ENCODE measurements at regions of chr1 and their contacts with region 1.

Region 1: DNA sequence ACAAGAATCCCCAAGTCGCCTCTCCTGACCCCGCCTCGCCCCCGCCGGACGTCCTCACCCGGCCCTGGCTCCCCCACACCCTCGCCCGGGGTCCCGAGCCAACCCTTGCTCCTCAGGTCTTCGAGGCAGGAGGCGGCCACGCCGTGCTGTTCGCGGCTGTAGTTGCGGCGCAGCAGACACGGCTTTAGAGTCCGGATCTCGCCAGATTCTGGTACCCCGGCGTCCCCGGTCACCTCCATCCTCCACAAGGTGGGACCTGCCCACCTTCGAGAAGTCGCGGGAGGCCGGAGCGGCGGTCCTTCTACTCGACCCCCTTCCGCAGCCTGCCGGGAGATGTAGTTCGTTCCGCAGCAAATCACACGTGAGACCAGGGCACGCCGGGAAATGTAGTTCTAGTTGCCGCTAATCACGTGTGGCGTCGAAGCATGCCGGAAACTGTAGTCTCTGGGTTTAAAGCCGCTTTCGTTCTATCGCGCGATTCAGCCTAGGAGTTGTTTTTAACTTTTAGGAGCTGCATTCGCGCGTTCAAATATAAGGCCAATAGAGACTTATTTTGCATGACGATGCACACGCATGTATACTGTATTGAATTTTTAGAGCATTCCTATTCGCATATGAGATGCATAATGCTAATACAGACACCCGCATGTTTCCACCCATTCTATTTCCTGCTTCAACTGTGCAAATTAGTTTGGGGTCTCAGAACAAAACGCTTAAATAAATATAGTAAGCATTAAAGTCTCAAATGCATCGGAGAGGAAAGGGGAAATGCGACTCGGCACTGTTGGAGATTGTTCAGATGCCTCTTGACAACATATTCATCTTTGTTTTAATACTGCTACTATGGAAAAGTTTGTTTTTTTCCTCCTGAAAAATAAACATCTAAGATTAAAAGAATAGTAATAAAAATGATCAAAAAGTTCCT is at the start of gene DFFA:
- DNase-seq: peak; percentile 68 to 95 (median 87)
- ATAC-seq: peak; percentile 90
- H3K4me3 ChIP-seq: peak within 1 kb of the TSS; percentile 69
- H3K4me3 Mint-ChIP-seq: peak within 1 kb of the TSS; percentile 87 to 96 (median 92)
- H3K27ac ChIP-seq: peak within 1 kb of the TSS; percentile 68
- H3K27ac Mint-ChIP-seq: peak within 1 kb of the TSS; percentile 78 to 93 (median 90)
- H3K4me1 ChIP-seq: peaks cover 21 to 37% of the 10 kb centered on the region in 2 donors
- H3K4me1 Mint-ChIP-seq: peaks cover 12 to 58% (median 49%) of the 10 kb centered on the region in 7 donors
- H3K27me3 ChIP-seq: no peaks in the 10 kb centered on the region
- H3K27me3 Mint-ChIP-seq: no peaks in the 10 kb centered on the region
- total RNA-seq, gene DFFA: 13.5 to 36.0 (median 23.4) TPM

Region 2: DNA sequence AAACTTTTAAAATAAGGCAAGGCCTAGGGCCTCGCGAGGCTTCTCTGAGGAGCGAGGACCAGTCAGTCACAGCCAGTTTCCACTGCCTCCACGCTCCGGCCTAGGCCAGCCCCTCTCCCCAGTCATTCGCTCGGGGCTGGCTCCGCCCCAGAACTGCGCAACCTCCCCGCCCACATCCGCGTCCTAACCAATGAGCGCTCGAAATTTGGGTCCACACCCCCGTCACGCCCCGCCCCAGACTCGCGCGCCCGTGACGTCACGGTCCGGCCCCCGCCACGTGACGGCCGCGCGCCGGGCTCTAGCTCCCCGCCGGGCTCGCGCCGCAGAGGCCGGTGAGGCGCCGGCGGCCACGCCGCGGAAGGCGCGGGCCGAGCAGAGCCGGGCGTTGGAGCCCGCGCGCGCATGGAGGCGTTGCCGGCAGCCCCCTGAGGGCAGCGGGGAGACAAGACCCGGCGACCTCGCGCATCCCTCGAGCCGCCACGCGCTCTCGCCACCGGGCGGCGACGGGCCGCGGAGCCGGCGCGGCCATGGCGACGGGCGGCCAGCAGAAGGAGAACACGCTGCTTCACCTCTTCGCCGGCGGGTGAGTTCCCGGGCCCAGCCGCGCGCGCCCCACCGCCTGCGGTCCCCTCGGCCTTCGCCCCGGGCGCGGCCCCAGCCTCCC is 933.2 kb before region 1 on chr1 and contains the start of gene SLC25A33:
- CTCF ChIA-PET with region 1: no interaction called
- POLR2A ChIA-PET with region 1: no interaction called
- intact Hi-C with region 1: loop called in 1 of 2 experiments (anchors 5 kb)
- DNase-seq: peak; percentile 92 to 99 (median 95)
- ATAC-seq: peak; percentile 99
- H3K4me3 ChIP-seq: peak within 1 kb of the TSS; percentile 58
- H3K4me3 Mint-ChIP-seq: peak within 1 kb of the TSS; percentile 86 to 93 (median 90)
- H3K27ac ChIP-seq: peak within 1 kb of the TSS; percentile 73
- H3K27ac Mint-ChIP-seq: peak within 1 kb of the TSS; percentile 85 to 97 (median 91)
- H3K4me1 ChIP-seq: peaks cover 5 to 8% of the 10 kb centered on the region in 2 donors
- H3K4me1 Mint-ChIP-seq: peaks cover 18 to 38% (median 31%) of the 10 kb centered on the region in 7 donors
- H3K27me3 ChIP-seq: no peaks in the 10 kb centered on the region
- H3K27me3 Mint-ChIP-seq: no peaks in the 10 kb centered on the region
- total RNA-seq, gene SLC25A33: 2.5 to 5.8 (median 3.9) TPM

Region 3: DNA sequence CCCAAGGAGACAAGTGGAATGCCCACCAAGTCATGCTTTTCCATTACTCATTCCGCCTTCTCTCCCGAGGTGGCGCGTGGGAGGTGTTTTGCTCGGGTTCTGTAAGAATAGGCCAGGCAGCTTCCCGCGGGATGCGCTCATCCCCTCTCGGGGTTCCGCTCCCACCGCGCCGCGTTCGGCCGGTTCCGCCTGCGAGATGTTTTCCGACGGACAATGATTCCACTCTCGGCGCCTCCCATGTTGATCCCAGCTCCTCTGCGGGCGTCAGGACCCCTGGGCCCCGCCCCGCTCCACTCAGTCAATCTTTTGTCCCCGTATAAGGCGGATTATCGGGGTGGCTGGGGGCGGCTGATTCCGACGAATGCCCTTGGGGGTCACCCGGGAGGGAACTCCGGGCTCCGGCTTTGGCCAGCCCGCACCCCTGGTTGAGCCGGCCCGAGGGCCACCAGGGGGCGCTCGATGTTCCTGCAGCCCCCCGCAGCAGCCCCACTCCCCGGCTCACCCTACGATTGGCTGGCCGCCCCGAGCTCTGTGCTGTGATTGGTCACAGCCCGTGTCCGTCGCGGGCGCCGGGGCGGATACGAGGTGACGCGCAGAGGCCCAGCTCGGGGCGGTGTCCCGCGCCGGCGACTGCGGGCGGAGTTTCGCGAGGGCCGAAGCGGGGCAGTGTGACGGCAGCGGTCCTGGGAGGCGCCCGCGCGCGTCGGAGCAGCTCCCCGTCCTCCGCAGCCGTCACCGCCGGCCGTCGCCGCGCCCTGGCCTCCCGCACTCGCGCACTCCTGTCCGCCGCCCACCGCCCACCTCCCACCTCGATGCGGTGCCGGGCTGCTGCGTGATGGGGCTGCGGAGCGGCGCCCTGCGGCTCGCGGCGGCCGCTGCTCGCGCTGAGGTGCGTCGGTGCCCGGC is 262.3 kb before region 1 on chr1 and contains the start of gene KIF1B:
- CTCF ChIA-PET with region 1: no interaction called
- POLR2A ChIA-PET with region 1: no interaction called
- intact Hi-C with region 1: loop called in 1 of 2 experiments (anchors 5 kb)
- DNase-seq: peak; percentile 93 to 98 (median 95)
- ATAC-seq: peak; percentile 99
- H3K4me3 ChIP-seq: peak within 1 kb of the TSS; percentile 94
- H3K4me3 Mint-ChIP-seq: peak within 1 kb of the TSS; percentile 83 to 93 (median 90)
- H3K27ac ChIP-seq: peak within 1 kb of the TSS; percentile 75
- H3K27ac Mint-ChIP-seq: peak within 1 kb of the TSS; percentile 51 to 82 (median 67)
- H3K4me1 ChIP-seq: peaks cover 5 to 15% of the 10 kb centered on the region in 2 donors
- H3K4me1 Mint-ChIP-seq: peaks cover 14 to 37% (median 21%) of the 10 kb centered on the region in 7 donors
- H3K27me3 ChIP-seq: peaks cover 0 to 4% of the 10 kb centered on the region in 2 donors
- H3K27me3 Mint-ChIP-seq: peaks cover 0 to 8% (median 0%) of the 10 kb centered on the region in 5 donors
- total RNA-seq, gene KIF1B: 10.4 to 21.6 (median 13.4) TPM

Region 4: GRCh38 chr1:10494754-10495474 is 22.4 kb after region 1 on chr1:
- CTCF ChIA-PET with region 1: interaction called, 9 read pairs
- POLR2A ChIA-PET with region 1: interaction called, 6 read pairs
- intact Hi-C with region 1: loop called (anchors 1 kb)
- DNase-seq: peak; percentile 66 to 83 (median 76)
- ATAC-seq: peak; percentile 88
- H3K4me3 ChIP-seq: peak overlapping the region; percentile 94
- H3K4me3 Mint-ChIP-seq: peak overlapping the region; percentile 82 to 93 (median 88)
- H3K27ac ChIP-seq: peak overlapping the region; percentile 79
- H3K27ac Mint-ChIP-seq: peak overlapping the region; percentile 91 to 97 (median 96)
- H3K4me1 ChIP-seq: peaks cover 17 to 19% of the 10 kb centered on the region in 2 donors
- H3K4me1 Mint-ChIP-seq: peaks cover 30 to 58% (median 51%) of the 10 kb centered on the region in 7 donors
- H3K27me3 ChIP-seq: no peaks in the 10 kb centered on the region
- H3K27me3 Mint-ChIP-seq: no peaks in the 10 kb centered on the region

Region 5: DNA sequence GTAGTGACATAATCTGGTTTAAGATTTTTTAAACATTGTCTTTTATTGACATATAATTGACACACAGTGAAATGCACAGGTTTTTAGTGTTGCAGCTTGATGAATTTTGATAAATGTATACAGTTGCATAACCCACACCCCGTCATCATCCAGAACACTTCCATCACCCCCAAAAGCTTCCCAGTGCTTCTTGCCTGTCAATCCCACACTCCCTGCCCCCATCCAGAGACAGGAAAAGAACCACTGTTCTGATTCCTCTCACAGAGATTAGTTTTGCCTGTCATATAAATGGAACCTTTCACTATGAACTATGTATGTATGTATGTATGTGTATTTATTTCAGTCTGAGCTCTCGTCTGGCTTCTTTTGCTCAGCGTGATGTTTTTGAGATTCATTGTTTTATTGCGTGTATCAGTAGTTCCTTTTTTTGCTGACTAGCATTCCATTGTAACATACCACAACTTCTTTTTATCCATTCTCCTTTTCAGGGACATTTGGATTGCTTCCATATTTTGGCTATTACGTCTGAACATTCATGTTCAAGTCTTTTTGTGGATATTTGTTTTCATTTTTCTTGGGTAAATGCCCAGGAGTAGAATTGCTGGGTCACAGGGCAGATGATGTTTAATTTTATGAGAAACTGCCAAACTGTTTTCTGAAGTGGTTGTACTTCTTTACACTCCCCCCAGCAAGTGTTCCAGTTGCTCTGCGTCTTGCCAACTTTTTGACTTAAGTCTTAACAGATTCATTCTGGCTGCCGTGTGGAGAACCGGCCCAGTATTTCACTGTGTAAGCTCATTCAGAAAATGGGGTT is 809.2 kb after region 1 on chr1:
- CTCF ChIA-PET with region 1: no interaction called
- POLR2A ChIA-PET with region 1: no interaction called
- intact Hi-C with region 1: loop called in 1 of 2 experiments (anchors 5 kb)
- DNase-seq: no peak
- ATAC-seq: no peak
- H3K4me3 ChIP-seq: peak overlapping the region; percentile 40
- H3K4me3 Mint-ChIP-seq: peak overlapping the region; percentile 49 to 85 (median 73)
- H3K27ac ChIP-seq: peak overlapping the region; percentile 71
- H3K27ac Mint-ChIP-seq: peak overlapping the region; percentile 70 to 98 (median 90)
- H3K4me1 ChIP-seq: peaks cover 21 to 81% of the 10 kb centered on the region in 2 donors
- H3K4me1 Mint-ChIP-seq: peaks cover 64 to 97% (median 87%) of the 10 kb centered on the region in 7 donors
- H3K27me3 ChIP-seq: no peaks in the 10 kb centered on the region
- H3K27me3 Mint-ChIP-seq: no peaks in the 10 kb centered on the region

Measured in naive thymus-derived CD4-positive, alpha-beta T cell (primary cell).